Caco-2 (cell line): ENCODE measurements at regions of chr11 and their contacts with region 1.

Region 1: DNA sequence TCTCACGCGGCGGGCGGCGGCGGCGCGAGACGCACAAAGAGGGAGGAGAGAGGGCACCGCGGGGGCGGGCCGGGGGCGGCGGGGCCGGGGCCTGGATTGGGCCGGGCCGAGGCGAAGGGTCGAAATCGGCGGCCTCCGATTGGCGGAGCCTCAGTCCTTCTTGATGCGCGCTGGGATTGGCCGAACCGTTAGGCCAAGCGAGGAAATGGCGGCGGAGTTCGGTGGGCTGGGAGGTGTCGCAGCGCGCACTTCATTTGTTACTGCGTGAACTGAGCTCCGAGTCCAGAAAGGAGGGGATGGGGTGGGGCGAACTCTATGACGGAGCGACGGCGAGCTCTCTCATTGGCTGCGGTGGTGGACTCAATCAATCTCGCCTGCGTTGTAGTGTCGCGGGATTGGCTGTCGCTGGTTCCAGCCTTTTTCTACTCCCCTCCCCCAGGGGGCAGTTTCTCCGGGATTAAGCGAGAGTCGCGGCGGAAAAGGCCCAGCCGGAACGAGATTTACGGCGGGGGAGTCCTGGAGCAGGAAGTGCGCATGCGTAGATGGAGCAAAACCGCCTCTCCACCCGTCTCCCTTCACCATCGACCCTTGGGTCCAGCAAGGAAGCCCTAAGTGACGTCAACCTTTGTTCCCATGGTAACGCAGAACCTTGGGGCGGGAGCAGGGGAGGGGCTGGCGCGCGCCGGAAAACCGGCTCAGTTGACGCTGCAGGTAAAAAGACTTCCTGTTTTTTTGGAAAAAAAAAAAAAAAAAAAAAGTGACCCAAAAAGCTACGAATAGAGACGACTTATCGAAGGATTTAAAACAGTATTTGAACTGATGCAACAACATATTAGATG is at the start of gene SF1:
- DNase-seq: peak; percentile 100
- H3K4me3 ChIP-seq: peak within 1 kb of the TSS; percentile 99
- H3K4me3 Mint-ChIP-seq: peak within 1 kb of the TSS; percentile 91
- H3K27ac Mint-ChIP-seq: peak within 1 kb of the TSS; percentile 99
- H3K4me1 ChIP-seq: peaks cover 17% of the 10 kb centered on the region
- H3K4me1 Mint-ChIP-seq: peaks cover 7% of the 10 kb centered on the region
- H3K27me3 ChIP-seq: no peaks in the 10 kb centered on the region
- H3K27me3 Mint-ChIP-seq: no peaks in the 10 kb centered on the region
- CTCF ChIP-seq: no peak
- total RNA-seq, gene SF1: 359 and 386 TPM in 2 replicates

Region 2: GRCh38 chr11:64742889-64743590 is 35.7 kb before region 1 on chr11:
- CTCF ChIA-PET with region 1: interaction called, 8 read pairs
- POLR2A ChIA-PET with region 1: interaction called, 10 read pairs
- intact Hi-C with region 1: no loop called
- DNase-seq: peak; percentile 68 to 91
- H3K4me3 ChIP-seq: peak overlapping the region; percentile 59
- H3K4me3 Mint-ChIP-seq: peak overlapping the region; percentile 69
- H3K27ac Mint-ChIP-seq: no peak overlapping the region
- H3K4me1 ChIP-seq: peaks cover 38% of the 10 kb centered on the region
- H3K4me1 Mint-ChIP-seq: peaks cover 9% of the 10 kb centered on the region
- H3K27me3 ChIP-seq: no peaks in the 10 kb centered on the region
- H3K27me3 Mint-ChIP-seq: peaks cover 6% of the 10 kb centered on the region
- CTCF ChIP-seq: peak; percentile 87 to 95

Region 3: GRCh38 chr11:64767344-64768299 is 11.1 kb before region 1 on chr11:
- CTCF ChIA-PET with region 1: no interaction called
- POLR2A ChIA-PET with region 1: interaction called, 13 read pairs
- intact Hi-C with region 1: no loop called
- DNase-seq: peak; percentile 76 to 83
- H3K4me3 ChIP-seq: no peak overlapping the region
- H3K4me3 Mint-ChIP-seq: no peak overlapping the region
- H3K27ac Mint-ChIP-seq: no peak overlapping the region
- H3K4me1 ChIP-seq: no peaks in the 10 kb centered on the region
- H3K4me1 Mint-ChIP-seq: no peaks in the 10 kb centered on the region
- H3K27me3 ChIP-seq: no peaks in the 10 kb centered on the region
- H3K27me3 Mint-ChIP-seq: no peaks in the 10 kb centered on the region
- CTCF ChIP-seq: peak; percentile 71 to 80

Region 4: GRCh38 chr11:64810271-64810890 is 31.7 kb after region 1 on chr11 and contains the start of gene MEN1:
- CTCF ChIA-PET with region 1: no interaction called
- POLR2A ChIA-PET with region 1: interaction called, 13 read pairs
- intact Hi-C with region 1: loop called (anchors 1 kb)
- DNase-seq: peak; percentile 98 to 99
- H3K4me3 ChIP-seq: peak within 1 kb of the TSS; percentile 90
- H3K4me3 Mint-ChIP-seq: peak within 1 kb of the TSS; percentile 85
- H3K27ac Mint-ChIP-seq: peak within 1 kb of the TSS; percentile 34
- H3K4me1 ChIP-seq: peaks cover 2% of the 10 kb centered on the region
- H3K4me1 Mint-ChIP-seq: peaks cover 2% of the 10 kb centered on the region
- H3K27me3 ChIP-seq: no peaks in the 10 kb centered on the region
- H3K27me3 Mint-ChIP-seq: no peaks in the 10 kb centered on the region
- CTCF ChIP-seq: no peak
- total RNA-seq, gene MEN1: 32.7 and 36.8 TPM in 2 replicates

Region 5: GRCh38 chr11:65391007-65391406 is 612.3 kb after region 1 on chr11:
- CTCF ChIA-PET with region 1: interaction called, 11 read pairs
- POLR2A ChIA-PET with region 1: no interaction called
- intact Hi-C with region 1: no loop called
- DNase-seq: peak in 1 of 2 experiments; percentile 46
- H3K4me3 ChIP-seq: no peak overlapping the region
- H3K4me3 Mint-ChIP-seq: no peak overlapping the region
- H3K27ac Mint-ChIP-seq: peak overlapping the region; percentile 50
- H3K4me1 ChIP-seq: peaks cover 6% of the 10 kb centered on the region
- H3K4me1 Mint-ChIP-seq: peaks cover 6% of the 10 kb centered on the region
- H3K27me3 ChIP-seq: no peaks in the 10 kb centered on the region
- H3K27me3 Mint-ChIP-seq: no peaks in the 10 kb centered on the region
- CTCF ChIP-seq: no peak